MCF 10A (cell line): ENCODE measurements at regions of chr4 and their contacts with region 1.

Region 1: DNA sequence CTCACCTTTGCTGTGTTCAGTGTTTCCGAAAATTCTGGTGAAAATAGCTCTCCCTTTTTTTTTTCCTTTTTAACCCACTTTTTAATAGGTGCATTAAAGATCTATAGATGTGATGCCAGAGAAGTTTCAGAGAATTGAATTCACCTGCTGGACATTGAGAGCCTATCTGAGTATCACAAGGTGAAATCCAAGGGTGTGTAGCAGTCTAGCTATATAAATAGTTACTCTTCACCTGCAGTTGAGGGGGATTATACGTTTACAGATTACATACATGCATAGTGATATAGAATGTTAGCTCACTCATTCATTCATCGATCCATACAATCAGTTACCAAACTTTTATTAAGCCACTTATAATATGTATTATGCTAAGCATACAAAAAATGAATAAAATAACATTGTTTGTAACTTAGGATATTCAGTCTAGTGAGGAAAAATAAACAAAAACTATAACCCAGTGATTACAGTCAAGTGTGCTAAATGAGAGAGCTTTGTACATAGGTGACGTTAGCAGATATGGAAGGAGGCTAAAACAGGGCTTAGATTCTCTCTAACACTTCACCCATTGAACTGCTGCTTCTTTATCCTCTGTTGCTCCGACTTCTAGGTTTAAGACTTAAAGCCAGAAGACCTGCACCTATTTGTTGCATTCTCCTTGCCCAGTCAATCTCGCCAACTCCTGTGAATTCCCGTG is 769.0 kb downstream of the STIM2 start:
- DNase-seq: no peak
- H3K4me3 Mint-ChIP-seq: no peak overlapping the region
- H3K27ac Mint-ChIP-seq: no peak overlapping the region
- H3K4me1 Mint-ChIP-seq: peaks cover 5% of the 10 kb centered on the region
- H3K27me3 Mint-ChIP-seq: no peaks in the 10 kb centered on the region
- CTCF ChIP-seq: no peak

Region 2: DNA sequence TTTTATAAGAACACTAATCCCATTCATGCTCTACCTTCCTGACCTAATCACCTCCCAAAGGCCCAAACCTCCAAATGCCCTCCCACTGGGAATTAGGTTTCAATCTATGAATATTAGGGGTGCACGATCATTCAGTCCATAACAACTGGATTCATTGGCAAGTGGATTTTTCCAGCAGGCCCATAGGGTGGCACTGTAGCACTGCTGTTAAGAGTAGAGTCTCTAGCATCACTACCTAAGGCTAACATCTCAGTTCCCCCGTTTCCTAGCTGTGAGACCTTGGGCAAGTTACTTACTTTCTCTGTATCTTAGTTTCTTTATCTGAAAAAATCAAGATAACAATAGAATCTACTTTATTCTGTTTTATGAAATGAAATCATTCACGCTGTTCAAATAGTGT is 453.3 kb before region 1 on chr4:
- CTCF ChIA-PET with region 1: interaction called, 3 read pairs
- POLR2A ChIA-PET with region 1: no interaction called
- intact Hi-C with region 1: loop called (anchors 5 kb)
- DNase-seq: peak; percentile 60
- H3K4me3 Mint-ChIP-seq: no peak overlapping the region
- H3K27ac Mint-ChIP-seq: no peak overlapping the region
- H3K4me1 Mint-ChIP-seq: peaks cover 5% of the 10 kb centered on the region
- H3K27me3 Mint-ChIP-seq: no peaks in the 10 kb centered on the region
- CTCF ChIP-seq: peak; percentile 69